Activated CD4-positive, alpha-beta T cell treated with anti-CD3 and anti-CD28 coated beads for 36 hours (primary cell): ENCODE measurements at regions of chr4 and their contacts with region 1.

Region 1: GRCh38 chr4:103075901-103076739 is 441 bp downstream of the SLC9B2 start:
- DNase-seq: peak; percentile 79
- ATAC-seq: peak; percentile 63
- H3K4me3 Mint-ChIP-seq: peak overlapping the region; percentile 84
- H3K27ac Mint-ChIP-seq: peak overlapping the region; percentile 99
- H3K4me1 Mint-ChIP-seq: peaks cover 45% of the 10 kb centered on the region
- H3K27me3 Mint-ChIP-seq: no peaks in the 10 kb centered on the region

Region 2: GRCh38 chr4:103019308-103020124 is 56.6 kb before region 1 on chr4 and contains the start of gene SLC9B1:
- CTCF ChIA-PET with region 1: no interaction called
- POLR2A ChIA-PET with region 1: no interaction called
- intact Hi-C with region 1: loop called (anchors 1 to 2 kb)
- DNase-seq: peak; percentile 97
- ATAC-seq: peak; percentile 98
- H3K4me3 Mint-ChIP-seq: peak within 1 kb of the TSS; percentile 86
- H3K27ac Mint-ChIP-seq: peak within 1 kb of the TSS; percentile 97
- H3K4me1 Mint-ChIP-seq: peaks cover 19% of the 10 kb centered on the region
- H3K27me3 Mint-ChIP-seq: no peaks in the 10 kb centered on the region
- total RNA-seq, gene SLC9B1: 1.8 to 3.7 TPM

Region 3: DNA sequence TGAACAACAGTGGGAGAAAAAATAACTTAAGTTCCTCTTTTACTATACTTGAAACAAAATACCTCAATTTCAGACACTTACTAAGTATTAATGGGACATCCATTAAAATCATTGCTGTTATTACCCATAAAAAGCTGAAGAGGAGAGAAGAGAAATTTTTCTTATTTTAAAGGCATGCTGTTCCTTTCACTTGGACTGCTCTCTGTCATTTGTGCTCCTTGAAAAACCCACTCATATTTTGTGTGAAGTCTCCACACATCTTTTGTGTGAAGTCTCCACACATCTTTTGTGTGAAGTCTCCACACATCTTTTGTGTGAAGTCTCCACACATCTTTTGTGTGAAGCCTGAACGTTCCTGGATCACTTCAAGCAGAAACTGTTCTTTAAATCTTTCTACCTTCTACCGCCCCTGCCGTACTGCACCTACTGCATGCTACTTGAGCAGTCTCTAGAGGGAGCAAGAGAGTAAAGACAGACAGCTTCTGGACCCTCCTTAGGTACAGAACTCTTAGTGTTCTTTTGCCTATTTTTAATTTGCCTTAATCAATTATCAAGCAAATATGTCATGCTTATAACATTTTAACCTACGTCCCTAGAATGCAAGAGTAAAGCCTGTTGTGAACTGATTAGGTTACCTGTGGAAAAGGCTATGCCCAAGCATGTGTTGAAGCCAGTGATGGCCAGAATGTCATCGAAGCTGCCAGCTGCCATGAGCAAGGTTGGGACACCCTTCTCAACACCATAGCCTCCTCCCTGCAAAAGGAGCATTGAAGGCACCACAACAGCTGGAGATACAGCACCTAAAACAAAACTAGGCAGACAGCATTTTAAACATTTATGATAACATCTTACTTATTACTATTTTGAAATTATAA is 29.5 kb before region 1 on chr4:
- CTCF ChIA-PET with region 1: interaction called, 15 read pairs
- POLR2A ChIA-PET with region 1: no interaction called
- intact Hi-C with region 1: no loop called
- DNase-seq: peak; percentile 49
- ATAC-seq: peak; percentile 96
- H3K4me3 Mint-ChIP-seq: no peak overlapping the region
- H3K27ac Mint-ChIP-seq: no peak overlapping the region
- H3K4me1 Mint-ChIP-seq: peaks cover 10% of the 10 kb centered on the region
- H3K27me3 Mint-ChIP-seq: no peaks in the 10 kb centered on the region